Dorsolateral prefrontal cortex (tissue), 120 donors: ENCODE measurements at regions of chr1 and their contacts with region 1.

Region 1: GRCh38 chr1:209937996-209938959 is at the start of gene SYT14:
- DNase-seq: peak; percentile 36 to 79 (median 60)
- H3K4me3 ChIP-seq: peak within 1 kb of the TSS; percentile 39 to 87 (median 70)
- H3K27ac ChIP-seq: peak within 1 kb of the TSS in 51 of 59 donors; percentile 12 to 88 (median 75)
- H3K27me3 ChIP-seq: peaks cover 0 to 16% (median 0%) of the 10 kb centered on the region in 45 donors
- CTCF ChIP-seq: peak in 2 of 56 donors; percentile 4 to 8
- total RNA-seq, gene SYT14: 8.0 to 26.7 (median 20.6) TPM

Region 2: DNA sequence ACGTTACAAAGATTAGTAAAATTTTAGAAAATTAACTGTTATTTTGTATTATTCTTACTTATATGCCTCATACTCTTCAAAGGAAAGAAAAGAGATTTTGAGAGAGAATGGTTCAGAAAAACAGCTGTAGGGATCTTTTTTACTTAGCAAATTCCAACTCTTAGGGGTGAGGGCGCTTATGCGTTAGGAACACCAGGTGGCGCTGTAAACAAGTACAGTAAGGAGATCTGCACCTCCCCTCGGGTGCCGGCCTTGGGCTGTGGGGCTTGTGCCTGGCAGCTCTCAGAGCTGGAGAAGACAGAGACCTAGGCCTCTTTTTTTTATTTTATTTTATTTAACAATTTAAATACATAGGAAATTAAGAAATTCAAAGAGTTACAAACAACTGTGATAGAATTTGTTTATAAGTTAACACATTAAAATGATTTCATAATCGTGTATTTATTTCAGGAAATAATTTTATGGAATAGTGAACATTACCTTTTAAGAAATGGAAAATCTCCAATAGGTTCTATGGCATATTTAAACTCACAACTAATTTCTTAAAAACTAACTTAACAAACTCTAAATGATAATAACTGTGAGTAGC is 77.9 kb before region 1 on chr1:
- intact Hi-C with region 1: loop called in 1 of 2 experiments (anchors 5 kb)
- DNase-seq: peak; percentile 77 to 91 (median 86)
- H3K4me3 ChIP-seq: no peak overlapping the region
- H3K27ac ChIP-seq: peak overlapping the region in 23 of 59 donors; percentile 1 to 78 (median 46)
- H3K27me3 ChIP-seq: peaks cover 0 to 3% (median 0%) of the 10 kb centered on the region in 45 donors
- CTCF ChIP-seq: peak; percentile 88 to 99 (median 96)

Region 3: GRCh38 chr1:209884665-209885117 is 53.6 kb before region 1 on chr1:
- intact Hi-C with region 1: loop called in 1 of 2 experiments (anchors 5 kb)
- DNase-seq: peak in 4 of 10 donors; percentile 45 to 86 (median 52)
- H3K4me3 ChIP-seq: no peak overlapping the region
- H3K27ac ChIP-seq: peak overlapping the region in 46 of 59 donors; percentile 32 to 99 (median 94)
- H3K27me3 ChIP-seq: no peaks in the 10 kb centered on the region
- CTCF ChIP-seq: no peak

Region 4: GRCh38 chr1:209989525-209989924 is 51.2 kb after region 1 on chr1:
- intact Hi-C with region 1: loop called in 1 of 2 experiments (anchors 5 kb)
- DNase-seq: no peak
- H3K4me3 ChIP-seq: no peak overlapping the region
- H3K27ac ChIP-seq: no peak overlapping the region
- H3K27me3 ChIP-seq: no peaks in the 10 kb centered on the region
- CTCF ChIP-seq: peak in 55 of 56 donors; percentile 28 to 86 (median 61)